ENCODE measurements at regions of chr11 and their contacts with region 1.

Region 1: DNA sequence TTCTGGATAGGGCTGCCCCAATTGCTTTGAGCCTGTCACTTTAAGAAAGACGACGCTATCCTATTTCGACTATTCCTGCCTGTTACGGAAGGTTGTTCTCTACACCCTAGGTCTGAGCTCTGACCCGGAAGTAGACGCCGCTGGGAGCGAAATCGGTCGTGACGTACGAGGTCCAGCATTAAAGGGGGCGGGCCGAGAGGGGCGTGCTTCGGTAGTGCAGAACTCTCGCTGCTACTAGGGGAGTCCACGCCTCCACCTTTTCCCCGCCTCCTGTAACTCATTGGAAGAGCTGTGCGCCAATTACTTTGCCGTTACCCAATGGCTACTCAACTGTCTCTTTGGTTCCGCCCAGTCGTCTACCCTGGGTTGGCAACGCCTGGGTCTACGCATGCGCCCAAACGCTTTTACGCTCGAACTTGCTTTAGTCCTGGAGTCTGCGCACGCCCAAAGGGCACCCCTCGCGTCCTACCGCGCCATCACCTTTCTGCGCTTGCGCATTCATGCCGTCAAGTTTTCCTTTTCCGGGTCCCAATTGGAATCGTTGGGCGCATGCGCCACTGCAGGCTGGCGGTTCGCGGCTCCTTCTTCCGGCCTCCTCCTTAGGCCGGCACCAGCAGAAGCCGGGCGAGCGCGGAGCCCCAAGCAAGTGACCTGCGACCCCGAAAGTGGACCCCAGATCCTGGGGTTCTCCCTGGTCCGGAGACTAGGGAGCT is at the start of gene PCNX3:
- DNase-seq: peak; percentile 100
- H3K4me3 Mint-ChIP-seq: peak within 1 kb of the TSS; percentile 97
- H3K27ac Mint-ChIP-seq: peak within 1 kb of the TSS; percentile 93
- H3K4me1 Mint-ChIP-seq: peaks cover 34% of the 10 kb centered on the region
- H3K27me3 Mint-ChIP-seq: peaks cover 3% of the 10 kb centered on the region
- total RNA-seq, gene PCNX3: 52.0 and 55.1 TPM in 2 replicates

Region 2: GRCh38 chr11:65540297-65541092 is 74.9 kb before region 1 on chr11:
- intact Hi-C with region 1: loop called (anchors 2 kb)
- DNase-seq: peak; percentile 96
- H3K4me3 Mint-ChIP-seq: peak overlapping the region; percentile 85
- H3K27ac Mint-ChIP-seq: peak overlapping the region; percentile 85
- H3K4me1 Mint-ChIP-seq: peaks cover 17% of the 10 kb centered on the region
- H3K27me3 Mint-ChIP-seq: no peaks in the 10 kb centered on the region

Region 3: DNA sequence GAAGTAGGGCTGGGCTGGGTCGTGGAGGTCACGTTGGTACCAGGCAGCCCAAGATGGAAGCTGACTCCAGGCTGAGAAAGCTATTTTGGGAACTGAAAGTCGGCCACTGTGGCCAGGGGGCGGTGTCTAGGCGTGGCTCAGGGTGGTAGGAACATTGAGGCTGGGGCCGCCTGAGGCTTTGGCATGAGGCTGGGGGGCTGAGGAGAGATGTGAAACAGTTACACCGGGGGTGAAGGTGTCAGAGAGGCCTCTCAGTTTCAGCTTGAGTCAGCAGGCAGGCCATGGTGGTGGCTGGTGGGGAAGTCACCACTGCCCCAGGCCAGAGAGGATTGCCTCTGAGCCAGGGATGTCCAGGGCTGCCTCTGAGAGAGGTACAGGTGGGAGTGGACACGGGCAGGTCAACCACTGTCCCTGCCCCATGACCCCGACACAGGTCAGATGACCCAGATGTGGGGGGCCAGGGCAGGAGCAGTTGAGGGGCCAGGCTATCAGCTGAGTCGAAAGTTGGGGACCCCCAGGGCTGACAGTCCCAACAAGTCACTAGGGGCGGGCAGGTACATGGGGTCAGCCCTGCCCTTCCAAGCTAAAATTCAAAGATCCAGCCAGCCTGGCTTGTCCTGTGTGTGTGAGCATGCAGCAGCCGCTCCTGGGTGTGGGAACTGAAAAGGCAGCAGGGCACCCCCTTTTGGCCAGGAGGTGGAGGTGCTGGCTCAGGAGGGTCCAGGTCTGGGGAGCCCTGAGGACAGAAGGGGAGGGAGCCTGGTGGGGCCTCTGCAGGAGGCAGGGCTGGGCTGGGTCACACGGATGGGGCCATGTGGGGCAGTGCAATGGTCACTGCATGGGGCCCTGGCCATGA is 27.0 kb before region 1 on chr11:
- intact Hi-C with region 1: loop called (anchors 2 kb)
- DNase-seq: peak; percentile 92
- H3K4me3 Mint-ChIP-seq: peak overlapping the region; percentile 81
- H3K27ac Mint-ChIP-seq: peak overlapping the region; percentile 93
- H3K4me1 Mint-ChIP-seq: peaks cover 36% of the 10 kb centered on the region
- H3K27me3 Mint-ChIP-seq: no peaks in the 10 kb centered on the region

Region 4: DNA sequence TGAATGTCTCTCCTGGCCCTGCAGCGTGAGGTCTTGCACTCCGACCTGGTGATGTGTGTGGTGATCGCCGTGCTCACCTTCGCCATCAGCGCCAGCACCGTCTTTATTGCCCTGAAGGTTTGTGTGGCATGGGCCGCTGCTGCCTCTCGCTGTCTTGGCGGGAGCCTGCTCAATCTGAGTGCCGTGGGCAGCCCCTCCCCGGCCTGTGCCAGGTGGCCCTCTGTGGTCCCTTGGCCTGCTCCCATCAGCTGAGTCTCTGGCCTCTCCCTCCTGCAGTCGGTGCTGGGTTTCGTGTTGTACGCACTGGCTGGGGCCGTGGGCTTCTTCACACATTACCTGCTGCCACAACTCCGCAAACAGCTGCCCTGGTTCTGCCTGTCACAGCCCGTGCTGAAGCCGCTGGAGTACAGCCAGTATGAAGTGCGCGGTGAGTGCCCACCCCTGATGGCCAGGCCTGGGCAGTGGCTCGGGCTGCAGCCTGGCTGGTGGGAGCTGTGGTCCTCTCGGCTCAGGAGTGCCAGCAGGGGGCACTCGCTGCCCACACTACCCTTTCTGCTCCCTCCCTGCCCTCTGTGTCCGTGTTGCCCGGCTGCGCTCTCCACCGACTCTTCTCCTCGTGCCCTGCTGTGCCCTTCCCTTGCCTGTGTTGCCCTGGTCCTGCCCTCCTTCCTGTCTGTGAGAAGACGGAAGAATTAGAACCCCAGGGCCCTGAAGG is 10.4 kb after region 1 on chr11:
- intact Hi-C with region 1: no loop called
- DNase-seq: peak; percentile 85
- H3K4me3 Mint-ChIP-seq: no peak overlapping the region
- H3K27ac Mint-ChIP-seq: no peak overlapping the region
- H3K4me1 Mint-ChIP-seq: peaks cover 2% of the 10 kb centered on the region
- H3K27me3 Mint-ChIP-seq: no peaks in the 10 kb centered on the region

Region 5: DNA sequence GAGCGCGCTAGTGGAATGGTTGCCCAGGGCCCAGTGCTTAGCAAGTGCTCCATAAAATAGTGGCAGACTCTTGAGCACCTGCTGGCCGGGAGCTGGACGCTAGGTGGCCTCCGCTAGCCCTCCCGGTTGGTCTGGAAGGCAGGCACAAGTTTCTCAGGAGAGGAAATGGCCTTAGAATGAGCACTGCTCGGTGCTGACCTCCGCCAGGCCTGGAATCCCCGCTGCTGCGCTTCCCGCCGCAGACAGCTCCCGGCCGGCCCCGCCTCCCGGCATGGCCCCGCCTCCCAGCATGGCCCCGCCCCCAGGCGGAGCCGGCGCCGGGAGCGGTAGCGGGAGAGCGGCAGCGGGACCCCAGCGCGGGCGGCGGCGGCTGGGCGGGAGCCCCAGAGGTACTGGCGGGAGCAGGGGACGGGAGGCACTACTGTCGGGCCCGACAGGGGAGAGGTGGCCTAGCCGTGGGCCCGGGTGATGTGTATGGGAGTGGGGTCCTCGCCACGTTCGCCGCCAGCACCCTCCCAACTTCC is 22.5 kb after region 1 on chr11 and contains the start of gene SIPA1:
- intact Hi-C with region 1: loop called (anchors 1 kb)
- DNase-seq: peak; percentile 95
- H3K4me3 Mint-ChIP-seq: peak within 1 kb of the TSS; percentile 84
- H3K27ac Mint-ChIP-seq: peak within 1 kb of the TSS; percentile 89
- H3K4me1 Mint-ChIP-seq: peaks cover 31% of the 10 kb centered on the region
- H3K27me3 Mint-ChIP-seq: no peaks in the 10 kb centered on the region
- total RNA-seq, gene SIPA1: 118 and 125 TPM in 2 replicates

Region 6: DNA sequence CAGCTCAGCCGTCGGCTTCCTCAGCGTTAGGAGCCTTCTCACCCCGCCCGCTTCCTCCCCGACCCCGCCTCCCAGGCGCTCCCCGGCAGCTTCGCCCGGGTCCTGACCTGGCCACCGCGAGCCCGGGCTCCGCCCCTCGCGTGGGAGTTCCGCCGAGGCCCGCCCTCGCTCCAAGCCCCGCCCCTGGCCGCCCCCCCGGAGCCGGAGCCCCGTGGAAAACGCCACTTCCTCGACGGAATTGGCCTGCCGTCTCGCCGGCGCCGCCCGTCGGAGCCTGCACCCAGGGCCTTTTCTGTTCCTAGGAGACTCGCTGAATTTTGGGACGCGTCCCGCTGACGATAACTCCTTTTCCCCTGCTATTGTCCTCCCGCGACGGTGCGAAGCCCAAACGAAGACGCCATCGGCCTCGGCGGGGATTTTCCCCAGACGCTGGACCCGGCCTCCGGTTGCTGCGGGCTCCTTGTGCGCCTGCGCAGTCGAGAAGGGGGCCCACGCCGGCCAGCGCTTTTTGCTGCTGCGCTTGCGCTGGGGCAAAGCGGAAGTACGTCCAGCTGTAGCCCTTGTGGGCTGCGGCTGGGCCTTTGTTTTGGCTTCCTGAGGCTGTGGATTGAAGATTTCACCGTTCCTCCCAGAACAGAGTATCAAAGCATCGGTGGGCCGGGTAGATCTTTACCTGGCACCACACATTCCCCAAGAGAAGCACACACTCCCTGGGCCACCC is 37.3 kb after region 1 on chr11:
- intact Hi-C with region 1: loop called (anchors 1 kb)
- DNase-seq: peak; percentile 99
- H3K4me3 Mint-ChIP-seq: peak overlapping the region; percentile 86
- H3K27ac Mint-ChIP-seq: peak overlapping the region; percentile 94
- H3K4me1 Mint-ChIP-seq: peaks cover 33% of the 10 kb centered on the region
- H3K27me3 Mint-ChIP-seq: no peaks in the 10 kb centered on the region

Region 7: DNA sequence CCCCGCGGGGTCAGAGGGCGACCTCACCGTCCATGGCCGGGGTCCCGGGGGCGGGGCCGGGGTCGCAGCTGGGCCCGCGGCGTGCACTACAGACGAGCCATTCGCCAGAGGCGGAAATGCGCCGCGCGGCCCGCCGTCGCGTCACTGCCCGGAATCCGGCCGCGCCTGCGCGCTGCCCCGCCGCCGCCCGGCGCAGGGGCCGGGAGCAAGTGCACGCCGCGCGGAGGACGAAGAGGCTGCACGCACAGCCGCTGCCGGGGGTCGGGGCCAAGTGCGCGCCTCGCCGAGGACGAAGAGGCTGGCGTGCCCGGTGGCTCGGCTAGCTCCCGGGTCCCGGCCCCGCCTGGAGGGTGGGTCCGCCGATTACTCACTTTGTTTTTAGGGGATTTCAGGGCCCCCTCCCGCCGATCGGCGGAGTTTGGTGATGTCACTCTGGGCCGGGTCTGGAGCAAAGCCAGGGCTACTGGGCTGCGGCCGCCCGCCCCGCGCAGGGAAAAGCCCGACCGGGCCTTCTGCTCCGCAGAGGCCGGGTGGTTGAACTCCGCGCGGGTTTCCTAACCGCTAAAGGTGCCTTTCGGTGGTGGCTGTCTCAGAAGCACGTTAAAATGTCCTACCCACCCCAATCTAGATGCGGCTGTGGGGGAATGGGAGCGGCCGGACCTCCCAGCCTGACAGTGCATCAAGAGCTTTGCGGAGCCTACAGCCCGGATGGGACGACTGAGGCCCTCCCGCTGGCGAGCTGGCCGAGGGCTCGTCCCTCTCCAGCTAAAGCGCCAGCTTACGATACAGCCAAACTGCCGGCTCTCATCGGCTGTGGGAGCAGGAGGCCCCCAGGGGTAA is 47.6 kb after region 1 on chr11 and contains the start of gene RELA:
- intact Hi-C with region 1: loop called (anchors 1 kb)
- DNase-seq: peak; percentile 97
- H3K4me3 Mint-ChIP-seq: peak within 1 kb of the TSS; percentile 92
- H3K27ac Mint-ChIP-seq: peak within 1 kb of the TSS; percentile 93
- H3K4me1 Mint-ChIP-seq: peaks cover 24% of the 10 kb centered on the region
- H3K27me3 Mint-ChIP-seq: no peaks in the 10 kb centered on the region
- total RNA-seq, gene RELA: 95.7 and 98.2 TPM in 2 replicates

Measured in activated CD4-positive, alpha-beta T cell treated with anti-CD3 and anti-CD28 coated beads, Interleukin-2, amount 10 ng/mL, durations not matched to agents 24 days and 14 days (primary cell).